Activated T-helper 1 cell treated with anti-CD3 and anti-CD28 coated beads, Interleukin-12 subunit alpha, Interleukin-12 subunit beta, Interleukin-2, Interleukin-4 antibody, amounts not matched to agents 30 ng/mL and 10 ng/mL and 1 ng/mL, durations not matched to agents 14 hours and 24 hours and 36 hours (primary cell): ENCODE measurements at regions of chr16 and their contacts with region 1.

Region 1: DNA sequence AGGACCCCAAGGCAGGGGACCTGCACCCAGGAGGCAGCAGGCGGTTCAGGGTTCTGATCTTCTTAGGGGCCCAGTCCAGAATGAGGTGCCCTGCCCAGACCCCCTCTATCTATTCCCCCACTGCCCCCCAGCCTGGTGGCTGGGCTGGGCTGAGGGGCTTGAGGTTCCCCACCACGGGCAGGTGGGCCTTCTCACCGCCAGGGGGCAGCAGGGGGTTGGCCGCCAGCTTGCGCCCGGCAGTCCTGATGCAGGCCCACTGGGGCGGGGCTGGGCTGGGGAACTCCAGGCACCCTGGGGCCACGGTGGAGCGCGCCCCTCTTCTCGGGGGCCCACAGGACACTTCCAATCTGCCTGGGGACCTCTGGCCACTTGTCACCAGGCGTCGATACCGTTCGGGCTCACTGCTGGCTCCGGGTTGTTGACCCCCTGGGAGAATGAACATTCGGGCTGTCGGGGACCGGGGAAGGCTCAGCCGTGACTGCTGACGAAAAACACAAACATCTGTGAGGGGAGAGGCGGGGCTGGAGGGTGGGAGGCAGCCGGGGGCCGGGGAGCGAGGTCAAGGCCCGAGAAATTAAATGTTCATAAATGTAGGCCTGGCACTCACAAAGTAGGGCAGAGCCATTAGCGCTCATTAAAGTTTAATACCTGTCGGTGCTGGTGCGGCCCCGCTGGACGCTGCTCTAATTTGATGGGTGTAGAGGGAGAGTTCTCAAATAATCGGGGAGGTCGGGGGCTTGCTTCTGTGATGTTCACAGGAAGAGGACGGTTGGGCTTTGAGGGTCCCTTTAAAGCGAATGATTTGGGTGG is 219.2 kb upstream of the GSE1 start:
- DNase-seq: peak; percentile 31
- H3K4me3 Mint-ChIP-seq: no peak overlapping the region
- H3K27ac Mint-ChIP-seq: no peak overlapping the region
- H3K4me1 Mint-ChIP-seq: no peaks in the 10 kb centered on the region
- H3K27me3 Mint-ChIP-seq: no peaks in the 10 kb centered on the region

Region 2: GRCh38 chr16:85258629-85259028 is 135.2 kb before region 1 on chr16:
- intact Hi-C with region 1: no loop called
- DNase-seq: no peak
- H3K4me3 Mint-ChIP-seq: no peak overlapping the region
- H3K27ac Mint-ChIP-seq: no peak overlapping the region
- H3K4me1 Mint-ChIP-seq: no peaks in the 10 kb centered on the region
- H3K27me3 Mint-ChIP-seq: peaks cover 8% of the 10 kb centered on the region

Region 3: DNA sequence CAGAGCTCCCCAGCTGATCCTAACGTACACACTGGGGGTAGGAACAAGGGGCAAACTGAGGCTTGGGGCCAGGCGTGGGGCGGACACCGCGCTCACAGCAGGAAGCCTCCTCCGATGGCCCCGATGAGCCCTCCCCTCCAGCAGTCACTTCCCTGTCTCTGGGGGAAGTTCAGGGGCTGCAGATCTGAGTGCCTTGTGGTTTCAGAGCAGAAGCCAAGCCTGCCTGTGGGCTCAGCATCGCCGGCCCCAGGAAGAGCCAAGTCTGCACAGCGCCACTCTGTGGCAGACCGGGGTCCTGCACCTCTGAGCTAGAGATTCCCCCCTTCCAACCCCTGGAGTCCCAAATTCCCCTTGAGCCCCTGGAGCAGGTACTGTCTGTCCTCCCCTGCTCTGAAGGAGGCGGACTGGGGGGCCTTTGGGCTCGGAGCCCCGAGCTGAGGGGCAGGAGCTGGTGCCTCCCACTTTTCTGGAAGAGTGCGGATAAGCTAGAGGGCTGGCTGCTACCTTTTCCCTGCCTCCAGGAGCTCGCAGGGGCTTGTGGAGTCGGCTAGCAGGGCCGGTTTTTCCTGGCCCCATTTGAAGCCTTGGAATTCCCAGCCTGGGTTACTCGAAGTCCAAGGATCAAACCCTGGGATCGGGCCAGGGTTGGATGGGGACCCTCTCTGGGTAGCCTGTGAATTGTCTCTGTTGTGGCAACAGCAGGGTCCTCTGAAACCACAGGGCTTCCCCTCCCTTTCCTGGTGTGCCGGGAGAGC is 222.2 kb after region 1 on chr16:
- intact Hi-C with region 1: loop called (anchors 1 kb)
- DNase-seq: peak; percentile 59
- H3K4me3 Mint-ChIP-seq: peak overlapping the region; percentile 37
- H3K27ac Mint-ChIP-seq: no peak overlapping the region
- H3K4me1 Mint-ChIP-seq: peaks cover 16% of the 10 kb centered on the region
- H3K27me3 Mint-ChIP-seq: peaks cover 16% of the 10 kb centered on the region

Region 4: GRCh38 chr16:85634747-85635544 is 241.1 kb after region 1 on chr16:
- intact Hi-C with region 1: no loop called
- DNase-seq: no peak
- H3K4me3 Mint-ChIP-seq: no peak overlapping the region
- H3K27ac Mint-ChIP-seq: no peak overlapping the region
- H3K4me1 Mint-ChIP-seq: no peaks in the 10 kb centered on the region
- H3K27me3 Mint-ChIP-seq: no peaks in the 10 kb centered on the region